ENCODE measurements at regions of chr1 and their contacts with region 1.

Region 1: DNA sequence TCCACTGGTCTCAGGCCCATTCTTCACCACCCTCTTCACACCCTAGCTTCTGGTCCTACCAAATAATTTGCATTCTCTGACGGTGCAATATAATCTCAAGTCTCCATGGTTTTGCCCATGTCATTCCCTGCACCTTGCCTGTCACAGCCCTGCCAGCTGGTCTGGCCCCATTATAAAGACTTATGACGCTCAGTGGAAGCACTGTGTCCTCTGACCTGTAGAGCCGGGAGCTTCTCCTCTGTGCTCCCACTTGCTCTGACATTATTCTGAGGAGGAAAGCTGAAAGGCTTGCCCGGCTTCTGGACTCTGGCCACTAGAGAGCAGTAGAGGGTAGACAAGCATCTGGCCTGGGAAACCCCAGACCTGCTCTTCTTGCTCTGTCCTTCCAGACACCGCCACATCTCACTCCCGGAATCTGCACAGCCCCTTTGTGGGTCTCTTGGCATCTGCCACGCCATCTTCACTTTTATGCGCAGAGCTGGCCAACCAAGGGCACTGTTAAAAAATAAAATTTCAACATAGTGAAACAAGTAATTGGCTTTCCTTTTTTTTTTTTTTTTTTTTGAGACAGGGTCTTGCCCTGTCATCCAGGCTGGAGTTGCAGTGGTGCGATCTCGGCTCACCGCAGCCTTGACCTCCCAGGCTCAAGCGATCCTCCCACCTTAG is 44.4 kb downstream of the NENF start:
- DNase-seq: peak; percentile 70 to 86
- ATAC-seq: peak; percentile 91 to 96 (median 94)
- H3K4me3 ChIP-seq: no peak overlapping the region
- H3K27ac ChIP-seq: no peak overlapping the region
- H3K4me1 ChIP-seq: peaks cover 0 to 7% (median 0%) of the 10 kb centered on the region in 9 donors
- H3K27me3 ChIP-seq: peaks cover 0 to 9% (median 0%) of the 10 kb centered on the region in 7 donors
- CTCF ChIP-seq: peak; percentile 80 to 97 (median 92)

Region 2: DNA sequence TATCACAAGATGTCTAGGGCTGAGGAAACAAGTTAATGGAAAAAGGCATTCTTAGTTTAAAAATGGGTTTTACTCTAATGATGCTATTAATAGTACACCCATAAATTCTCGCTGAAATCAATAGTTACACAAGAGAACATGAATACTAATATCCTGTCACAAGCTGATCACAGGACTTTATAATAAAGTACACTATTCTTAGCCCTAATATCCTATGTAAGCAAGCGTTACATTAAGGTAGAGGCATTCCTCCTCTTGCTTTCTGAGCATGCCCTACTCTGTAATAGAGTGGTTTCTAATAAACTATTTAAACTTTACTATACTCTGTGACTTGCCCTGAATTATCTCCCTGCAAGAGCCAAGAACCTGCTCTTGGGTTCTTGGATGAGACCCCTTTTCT is 56.0 kb before region 1 on chr1:
- intact Hi-C with region 1: no loop called
- DNase-seq: no peak
- ATAC-seq: no peak
- H3K4me3 ChIP-seq: no peak overlapping the region
- H3K27ac ChIP-seq: no peak overlapping the region
- H3K4me1 ChIP-seq: no peaks in the 10 kb centered on the region
- H3K27me3 ChIP-seq: no peaks in the 10 kb centered on the region
- CTCF ChIP-seq: no peak

Region 3: DNA sequence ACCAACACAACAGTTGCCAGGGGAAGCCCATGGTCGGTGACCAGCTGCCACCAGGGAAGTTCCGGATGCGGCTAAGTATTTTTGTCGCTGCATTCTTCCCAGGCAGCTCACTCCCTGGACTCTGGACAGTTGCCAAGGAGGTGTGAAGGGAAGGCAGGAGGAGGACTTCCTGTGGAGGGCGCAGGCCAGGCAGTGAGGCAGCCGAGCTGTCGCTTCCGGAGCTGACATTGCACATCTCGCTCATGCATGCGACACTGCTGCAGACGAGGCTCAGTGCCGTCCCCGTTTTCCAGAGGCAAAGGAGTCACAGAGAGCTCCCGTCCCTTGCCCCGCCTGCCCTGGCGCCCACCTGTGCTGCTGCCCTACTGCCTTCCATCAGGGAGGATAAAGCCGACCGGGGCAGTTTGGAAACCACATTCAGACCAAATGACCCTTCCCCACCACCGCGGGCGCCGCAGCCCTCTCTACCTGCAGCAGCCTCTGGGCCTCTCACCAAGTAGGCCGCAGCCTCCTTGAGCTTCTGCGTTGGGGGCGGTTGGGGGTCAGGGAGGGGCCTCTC is 37.0 kb after region 1 on chr1:
- intact Hi-C with region 1: no loop called
- DNase-seq: peak; percentile 57 to 64
- ATAC-seq: peak; percentile 10 to 67 (median 36)
- H3K4me3 ChIP-seq: peak overlapping the region in 8 of 10 donors; percentile 3 to 38 (median 18)
- H3K27ac ChIP-seq: no peak overlapping the region
- H3K4me1 ChIP-seq: peaks cover 6 to 28% (median 19%) of the 10 kb centered on the region in 9 donors
- H3K27me3 ChIP-seq: peaks cover 0 to 62% (median 25%) of the 10 kb centered on the region in 7 donors
- CTCF ChIP-seq: peak in 3 of 9 donors; percentile 12 to 26 (median 17)

Region 4: DNA sequence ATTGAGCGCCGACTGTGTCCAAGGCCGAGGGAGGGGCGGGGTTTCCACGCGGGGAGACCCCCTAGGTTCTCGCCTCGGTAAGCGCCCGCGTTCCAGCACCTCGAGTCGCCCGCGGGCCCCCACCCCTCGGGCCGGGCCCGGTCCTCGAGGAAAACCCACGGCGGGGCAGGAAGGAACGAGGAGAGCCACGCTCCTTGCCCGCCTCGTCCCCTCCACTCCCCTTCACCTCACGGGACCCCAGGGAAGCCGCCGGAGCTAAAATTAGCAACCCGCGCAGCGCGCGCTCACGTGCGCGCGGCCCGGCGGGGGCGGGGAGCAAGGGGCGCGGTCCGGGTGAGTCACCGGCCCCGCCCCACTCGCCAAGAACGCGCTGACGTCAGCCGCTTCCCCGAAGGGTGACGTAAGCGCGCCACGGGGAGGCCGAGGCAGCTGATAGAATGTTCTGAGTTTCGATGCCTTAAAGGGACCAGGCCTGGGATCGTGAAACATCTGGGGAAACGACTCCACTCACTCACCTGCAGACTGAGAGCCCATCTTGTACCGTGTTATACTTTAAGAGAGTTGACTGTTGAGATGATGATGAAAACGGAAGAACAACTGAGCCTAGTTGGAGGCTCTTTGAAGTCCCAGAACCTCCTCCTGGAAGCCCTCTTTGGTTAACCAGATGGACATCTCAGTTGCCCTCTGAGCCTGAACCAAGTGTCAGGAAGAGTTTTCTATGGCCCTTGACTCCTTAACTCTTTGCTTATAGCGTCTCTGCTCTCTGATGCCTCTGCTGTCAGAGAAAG is 81.7 kb after region 1 on chr1:
- intact Hi-C with region 1: loop called in 5 of 10 experiments (anchors 10 kb)
- DNase-seq: peak; percentile 94
- ATAC-seq: peak; percentile 93 to 98 (median 96)
- H3K4me3 ChIP-seq: peak overlapping the region; percentile 49 to 96 (median 73)
- H3K27ac ChIP-seq: peak overlapping the region; percentile 85 to 99 (median 98)
- H3K4me1 ChIP-seq: peaks cover 0 to 26% (median 13%) of the 10 kb centered on the region in 9 donors
- H3K27me3 ChIP-seq: no peaks in the 10 kb centered on the region
- CTCF ChIP-seq: no peak

Region 5: GRCh38 chr1:212608209-212608955 is 131.2 kb after region 1 on chr1 and contains the start of gene ATF3:
- intact Hi-C with region 1: loop called in 6 of 10 experiments (anchors 1 to 5 kb)
- DNase-seq: peak; percentile 99
- ATAC-seq: peak; percentile 94 to 98 (median 95)
- H3K4me3 ChIP-seq: peak within 1 kb of the TSS; percentile 63 to 95 (median 82)
- H3K27ac ChIP-seq: peak within 1 kb of the TSS; percentile 87 to 100 (median 98)
- H3K4me1 ChIP-seq: peaks cover 11 to 60% (median 43%) of the 10 kb centered on the region in 9 donors
- H3K27me3 ChIP-seq: peaks cover 0 to 65% (median 0%) of the 10 kb centered on the region in 7 donors
- CTCF ChIP-seq: no peak
- total RNA-seq, gene ATF3: 8.4 to 684 (median 25.9) TPM

Region 6: DNA sequence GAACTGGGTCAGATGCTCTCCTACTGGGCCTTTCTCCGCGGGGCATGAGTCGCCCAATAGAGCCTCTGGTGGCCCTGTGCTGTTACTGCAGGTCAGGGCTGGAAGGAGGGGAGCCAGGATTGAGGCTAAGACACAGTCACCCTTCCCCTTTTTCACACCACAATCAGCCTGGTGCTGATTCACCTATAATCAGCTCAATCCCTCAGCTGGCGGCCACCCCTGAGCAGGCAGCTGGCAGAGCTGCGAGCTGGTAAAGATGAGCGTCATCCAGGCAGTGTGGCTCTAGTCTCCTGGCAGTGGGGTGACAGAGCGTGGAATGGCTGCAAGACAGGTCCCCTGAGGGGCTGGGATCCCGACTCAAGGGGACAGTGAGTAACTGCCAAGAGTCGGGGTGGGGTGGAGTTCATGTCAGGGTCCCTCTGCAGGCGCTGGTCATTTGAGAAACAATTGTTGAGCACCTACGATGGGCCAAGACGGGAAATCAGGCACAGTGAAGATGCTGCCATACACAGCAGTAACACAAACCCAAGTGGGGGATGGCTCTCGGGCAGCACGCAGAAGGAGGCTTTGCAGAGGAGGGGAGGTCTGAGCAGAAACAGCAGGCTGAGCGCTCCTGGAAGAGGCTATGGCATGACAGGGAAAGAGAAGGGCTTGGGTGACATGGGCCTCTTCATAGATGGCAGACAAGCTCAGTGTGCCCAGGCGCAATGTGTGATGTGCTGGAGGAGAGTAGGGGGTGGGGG is 153.2 kb after region 1 on chr1:
- intact Hi-C with region 1: loop called in 9 of 10 experiments (anchors 1 to 10 kb)
- DNase-seq: peak; percentile 56 to 60
- ATAC-seq: peak; percentile 85 to 93 (median 90)
- H3K4me3 ChIP-seq: no peak overlapping the region
- H3K27ac ChIP-seq: no peak overlapping the region
- H3K4me1 ChIP-seq: peaks cover 0 to 20% (median 9%) of the 10 kb centered on the region in 9 donors
- H3K27me3 ChIP-seq: no peaks in the 10 kb centered on the region
- CTCF ChIP-seq: peak; percentile 76 to 94 (median 85)

Region 7: DNA sequence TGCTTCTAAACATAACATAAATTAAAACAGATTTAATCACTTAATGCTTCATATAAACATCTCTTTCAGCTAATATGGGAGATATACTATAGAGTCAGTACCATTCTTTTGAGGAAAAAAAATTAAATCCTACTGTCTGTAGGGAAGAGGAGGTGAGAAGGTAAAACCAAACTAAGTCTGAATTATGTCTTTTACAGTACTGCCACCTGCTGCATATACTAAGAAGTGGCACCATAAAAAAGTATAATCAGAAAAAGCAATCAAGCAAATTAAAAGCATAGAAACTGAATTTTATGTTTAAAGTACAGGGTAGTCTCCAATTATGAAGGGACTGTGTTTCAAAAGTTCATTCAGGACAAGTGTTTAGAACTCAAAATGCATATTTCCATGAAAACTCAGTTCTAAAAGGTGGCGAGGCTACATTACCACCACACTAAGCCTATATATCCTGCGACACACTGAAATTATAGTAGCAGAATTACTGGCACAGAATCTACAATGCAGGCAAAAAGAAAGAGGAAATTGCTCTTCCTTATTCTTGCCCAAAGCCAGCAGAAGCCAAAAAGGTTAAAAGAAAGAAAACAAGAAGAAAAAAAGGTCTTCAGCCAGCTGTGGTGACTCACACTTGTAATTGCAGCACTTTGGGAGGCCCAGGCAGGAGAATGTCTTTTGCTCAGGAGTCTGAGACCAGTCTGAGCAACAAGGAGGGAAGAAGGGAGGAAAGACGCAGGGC is 305.4 kb after region 1 on chr1:
- intact Hi-C with region 1: loop called in 8 of 10 experiments (anchors 5 to 10 kb)
- DNase-seq: no peak
- ATAC-seq: peak in 3 of 8 donors; percentile 53 to 59 (median 57)
- H3K4me3 ChIP-seq: no peak overlapping the region
- H3K27ac ChIP-seq: peak overlapping the region in 1 of 10 donors; percentile 28
- H3K4me1 ChIP-seq: peaks cover 0 to 17% (median 0%) of the 10 kb centered on the region in 9 donors
- H3K27me3 ChIP-seq: no peaks in the 10 kb centered on the region
- CTCF ChIP-seq: peak; percentile 39 to 69 (median 64)

Measured in heart right ventricle (tissue), 16 donors.